Psoas muscle (tissue), 8 donors: ENCODE measurements at regions of chr4 and their contacts with region 1.

Region 1: DNA sequence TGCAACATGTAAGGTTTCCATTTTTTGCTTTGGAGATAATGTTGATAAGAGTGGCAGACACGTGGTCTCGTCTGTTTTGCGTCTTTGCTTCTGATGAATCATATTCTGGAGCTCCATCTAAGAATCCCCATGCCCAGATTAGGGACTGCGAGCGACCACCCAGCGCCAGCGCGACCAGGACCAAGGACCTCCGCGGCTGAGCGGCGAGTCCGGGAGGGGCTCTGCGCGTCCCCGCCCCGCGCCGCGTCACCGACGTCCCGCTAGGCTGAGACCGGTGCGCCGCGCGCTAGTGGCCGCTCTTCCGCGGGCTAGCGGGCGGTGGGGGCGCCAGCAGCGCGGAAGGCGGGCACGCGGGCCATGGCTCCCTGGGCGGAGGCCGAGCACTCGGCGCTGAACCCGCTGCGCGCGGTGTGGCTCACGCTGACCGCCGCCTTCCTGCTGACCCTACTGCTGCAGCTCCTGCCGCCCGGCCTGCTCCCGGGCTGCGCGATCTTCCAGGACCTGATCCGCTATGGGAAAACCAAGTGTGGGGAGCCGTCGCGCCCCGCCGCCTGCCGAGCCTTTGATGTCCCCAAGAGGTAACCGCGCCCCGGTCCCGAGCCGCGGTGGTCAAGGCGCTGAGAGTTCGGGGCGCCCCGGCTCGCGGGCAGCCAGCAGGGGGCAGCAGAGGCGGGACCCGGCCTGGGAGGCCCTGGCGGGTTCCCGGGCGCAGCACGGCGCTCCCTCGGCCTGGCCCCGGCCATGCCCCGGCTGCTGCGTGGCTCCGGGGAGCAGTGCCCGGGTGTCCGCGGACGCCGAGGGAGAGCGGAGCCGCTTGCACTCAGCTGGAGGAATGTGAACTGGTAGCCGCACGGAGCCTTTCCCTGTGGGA is at the start of gene SRD5A3:
- DNase-seq: peak; percentile 89 to 93
- ATAC-seq: peak; percentile 96 to 98 (median 97)
- H3K4me3 ChIP-seq: peak within 1 kb of the TSS; percentile 75
- H3K27ac ChIP-seq: peak within 1 kb of the TSS; percentile 93
- H3K4me1 ChIP-seq: peaks cover 20% of the 10 kb centered on the region
- H3K27me3 ChIP-seq: no peaks in the 10 kb centered on the region
- CTCF ChIP-seq: peak; percentile 98
- total RNA-seq, gene SRD5A3: 4.0 to 8.6 (median 6.4) TPM

Region 2: GRCh38 chr4:55395529-55396307 is 49.5 kb after region 1 on chr4 and contains the start of gene TMEM165:
- intact Hi-C with region 1: loop called in 1 of 2 experiments (anchors 2 kb)
- DNase-seq: peak; percentile 91 to 94
- ATAC-seq: peak; percentile 97 to 99 (median 98)
- H3K4me3 ChIP-seq: peak within 1 kb of the TSS; percentile 92
- H3K27ac ChIP-seq: peak within 1 kb of the TSS; percentile 95
- H3K4me1 ChIP-seq: peaks cover 30% of the 10 kb centered on the region
- H3K27me3 ChIP-seq: no peaks in the 10 kb centered on the region
- CTCF ChIP-seq: no peak
- total RNA-seq, gene TMEM165: 16.0 to 42.4 (median 27.5) TPM

Region 3: DNA sequence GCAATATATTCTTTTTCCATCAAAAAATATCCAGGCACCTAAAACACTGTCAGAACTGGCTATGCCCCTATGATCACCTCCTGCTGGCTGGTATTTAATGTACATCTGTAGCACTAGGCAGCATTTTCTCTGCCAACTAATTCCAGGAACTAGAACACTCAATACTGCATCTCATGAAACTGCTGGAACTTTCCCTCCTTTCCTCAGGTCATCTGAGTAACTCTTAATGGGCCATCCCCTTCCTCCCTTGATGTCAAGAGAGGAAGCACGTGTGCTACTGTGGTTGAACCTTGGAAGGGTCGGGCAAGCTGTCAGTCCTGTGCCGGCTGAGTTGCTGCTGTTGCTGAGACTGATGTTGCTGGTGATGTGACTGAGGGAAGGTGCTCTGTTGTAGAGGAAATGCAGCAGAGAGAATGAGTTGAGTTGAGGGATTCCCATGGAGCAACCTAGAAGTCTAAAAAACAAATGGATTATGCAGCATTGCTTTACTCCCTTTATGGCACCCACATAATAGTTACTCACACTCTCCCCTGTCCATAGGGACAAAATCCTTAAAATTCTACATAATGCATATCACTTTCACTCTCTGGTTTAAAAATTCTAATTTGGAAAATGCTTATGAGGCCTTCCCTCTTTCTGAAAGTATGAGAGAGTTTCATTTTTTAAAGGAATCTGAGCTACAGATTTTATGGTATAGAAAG is 89.1 kb after region 1 on chr4:
- intact Hi-C with region 1: loop called in 1 of 2 experiments (anchors 10 kb)
- DNase-seq: no peak
- ATAC-seq: peak in 3 of 4 donors; percentile 48 to 53 (median 49)
- H3K4me3 ChIP-seq: no peak overlapping the region
- H3K27ac ChIP-seq: no peak overlapping the region
- H3K4me1 ChIP-seq: no peaks in the 10 kb centered on the region
- H3K27me3 ChIP-seq: no peaks in the 10 kb centered on the region
- CTCF ChIP-seq: no peak

Region 4: GRCh38 chr4:55485821-55486220 is 139.6 kb after region 1 on chr4:
- intact Hi-C with region 1: no loop called
- DNase-seq: no peak
- ATAC-seq: no peak
- H3K4me3 ChIP-seq: no peak overlapping the region
- H3K27ac ChIP-seq: no peak overlapping the region
- H3K4me1 ChIP-seq: no peaks in the 10 kb centered on the region
- H3K27me3 ChIP-seq: no peaks in the 10 kb centered on the region
- CTCF ChIP-seq: no peak

Region 5: GRCh38 chr4:55546756-55547465 is 200.7 kb after region 1 on chr4 and contains the start of gene CLOCK:
- intact Hi-C with region 1: loop called (anchors 2 to 5 kb)
- DNase-seq: peak; percentile 91 to 95
- ATAC-seq: peak; percentile 87 to 93 (median 90)
- H3K4me3 ChIP-seq: peak within 1 kb of the TSS; percentile 97
- H3K27ac ChIP-seq: peak within 1 kb of the TSS; percentile 96
- H3K4me1 ChIP-seq: peaks cover 18% of the 10 kb centered on the region
- H3K27me3 ChIP-seq: no peaks in the 10 kb centered on the region
- CTCF ChIP-seq: peak; percentile 63
- total RNA-seq, gene CLOCK: 21.8 to 54.1 (median 31.5) TPM

Region 6: GRCh38 chr4:55554453-55555030 is 208.3 kb after region 1 on chr4:
- intact Hi-C with region 1: loop called in 1 of 2 experiments (anchors 5 kb)
- DNase-seq: no peak
- ATAC-seq: peak in 2 of 4 donors; percentile 36 to 69
- H3K4me3 ChIP-seq: no peak overlapping the region
- H3K27ac ChIP-seq: no peak overlapping the region
- H3K4me1 ChIP-seq: peaks cover 6% of the 10 kb centered on the region
- H3K27me3 ChIP-seq: no peaks in the 10 kb centered on the region
- CTCF ChIP-seq: peak; percentile 44

Region 7: GRCh38 chr4:55853484-55854046 is 507.4 kb after region 1 on chr4 and contains the start of gene EXOC1:
- intact Hi-C with region 1: loop called in 1 of 2 experiments (anchors 10 kb)
- DNase-seq: peak; percentile 99
- ATAC-seq: peak; percentile 100
- H3K4me3 ChIP-seq: peak within 1 kb of the TSS; percentile 100
- H3K27ac ChIP-seq: peak within 1 kb of the TSS; percentile 94
- H3K4me1 ChIP-seq: peaks cover 20% of the 10 kb centered on the region
- H3K27me3 ChIP-seq: peaks cover 0 to under 1% (median 0%) of the 10 kb centered on the region in 3 donors
- CTCF ChIP-seq: no peak
- total RNA-seq, gene EXOC1: 14.2 to 22.1 (median 18.4) TPM